ENCODE measurements at regions of chr11 and their contacts with region 1.

Region 1: GRCh38 chr11:119168471-119169281 is at the start of gene NLRX1:
- DNase-seq: peak; percentile 67 to 85 (median 82)
- ATAC-seq: peak; percentile 98
- H3K4me3 ChIP-seq: peak within 1 kb of the TSS; percentile 75
- H3K4me3 Mint-ChIP-seq: peak within 1 kb of the TSS; percentile 86 to 94 (median 90)
- H3K27ac ChIP-seq: peak within 1 kb of the TSS; percentile 73
- H3K27ac Mint-ChIP-seq: peak within 1 kb of the TSS; percentile 64 to 95 (median 87)
- H3K4me1 ChIP-seq: peaks cover 0 to 4% of the 10 kb centered on the region in 2 donors
- H3K4me1 Mint-ChIP-seq: peaks cover 4 to 25% (median 11%) of the 10 kb centered on the region in 7 donors
- H3K27me3 ChIP-seq: no peaks in the 10 kb centered on the region
- H3K27me3 Mint-ChIP-seq: no peaks in the 10 kb centered on the region
- total RNA-seq, gene NLRX1: 8.3 to 19.5 (median 9.8) TPM

Region 2: DNA sequence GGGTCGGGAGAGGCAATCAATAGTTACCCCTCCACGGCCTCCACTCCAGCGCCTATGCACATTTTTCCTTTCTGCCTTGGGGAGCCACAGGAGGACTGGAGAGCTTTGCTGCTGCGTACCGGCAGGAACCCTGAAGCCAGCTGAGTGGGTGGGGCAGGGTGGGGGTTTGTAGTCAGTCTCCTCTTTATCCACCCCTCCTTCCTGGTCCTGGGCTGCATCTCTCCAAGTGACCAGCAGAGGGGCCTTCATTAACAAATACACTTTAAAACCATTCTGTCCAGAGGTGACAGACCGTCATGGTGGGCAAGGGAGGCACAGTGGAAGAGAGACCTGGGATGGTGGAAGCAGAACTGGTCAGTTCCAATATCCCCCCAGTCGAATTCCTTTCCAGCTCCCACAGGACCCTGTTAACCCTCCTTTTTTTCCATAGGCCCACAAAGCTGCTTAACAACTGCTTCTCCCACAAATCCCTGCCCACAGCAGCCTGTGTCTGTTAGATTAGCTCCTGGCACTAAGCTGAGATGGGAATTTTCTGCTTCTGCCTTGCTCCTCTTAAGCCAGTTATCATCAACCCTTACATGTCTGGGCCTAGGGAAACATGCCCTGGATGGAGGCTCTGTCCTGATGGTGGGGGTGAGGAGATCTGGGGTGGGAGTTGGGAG is 23.7 kb before region 1 on chr11:
- CTCF ChIA-PET with region 1: no interaction called
- POLR2A ChIA-PET with region 1: interaction called, 3 read pairs
- intact Hi-C with region 1: loop called in 1 of 2 experiments (anchors 2 kb)
- DNase-seq: no peak
- ATAC-seq: peak; percentile 80
- H3K4me3 ChIP-seq: no peak overlapping the region
- H3K4me3 Mint-ChIP-seq: no peak overlapping the region
- H3K27ac ChIP-seq: no peak overlapping the region
- H3K27ac Mint-ChIP-seq: peak overlapping the region in 1 of 9 donors; percentile 59
- H3K4me1 ChIP-seq: peaks cover 0 to 11% of the 10 kb centered on the region in 2 donors
- H3K4me1 Mint-ChIP-seq: peaks cover 5 to 18% (median 13%) of the 10 kb centered on the region in 7 donors
- H3K27me3 ChIP-seq: no peaks in the 10 kb centered on the region
- H3K27me3 Mint-ChIP-seq: peaks cover 31 to 51% (median 36%) of the 10 kb centered on the region in 5 donors

Region 3: DNA sequence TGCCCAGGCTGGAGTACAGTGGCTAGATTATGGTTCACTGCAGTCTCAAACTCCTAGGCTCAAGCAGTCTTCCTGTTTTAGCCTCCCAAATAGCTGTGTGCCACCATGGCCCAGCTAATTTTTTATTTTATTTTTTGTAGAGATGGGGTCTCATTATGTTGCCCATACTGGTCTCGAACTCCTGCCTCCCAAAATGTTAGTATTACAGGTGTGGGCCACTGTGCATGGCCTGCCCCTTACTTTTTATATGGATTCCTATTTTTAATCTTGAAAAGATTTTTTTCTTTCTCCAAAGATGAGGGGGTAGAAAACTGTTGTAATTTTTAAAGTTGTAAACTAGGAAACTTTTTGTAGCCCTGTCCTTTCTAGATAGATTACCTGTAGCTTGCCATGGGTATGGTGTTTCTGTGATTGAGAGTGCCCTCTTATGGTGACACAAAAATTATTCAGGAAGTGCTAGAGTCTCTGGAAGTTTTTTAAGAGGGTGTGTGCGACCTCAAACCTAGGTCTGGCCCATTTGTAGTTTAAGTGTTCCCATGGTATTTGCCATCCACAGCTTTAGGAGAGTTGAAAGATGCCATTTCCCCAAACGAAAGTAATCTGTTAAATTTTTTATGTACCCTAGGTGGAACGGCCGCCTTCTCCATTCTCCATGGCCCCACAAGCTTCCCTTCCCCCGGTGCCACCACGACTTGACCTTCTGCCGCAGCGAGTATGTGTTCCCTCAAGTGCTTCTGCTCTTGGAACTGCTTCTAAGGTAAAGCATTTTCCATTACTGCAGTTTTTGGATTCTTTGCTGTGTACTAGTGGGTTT is 115.9 kb after region 1 on chr11:
- CTCF ChIA-PET with region 1: interaction called, 9 read pairs
- POLR2A ChIA-PET with region 1: interaction called, 3 read pairs
- intact Hi-C with region 1: loop called in 1 of 2 experiments (anchors 1 kb)
- DNase-seq: peak in 7 of 9 donors; percentile 56 to 76 (median 68)
- ATAC-seq: peak; percentile 94
- H3K4me3 ChIP-seq: no peak overlapping the region
- H3K4me3 Mint-ChIP-seq: peak overlapping the region in 2 of 10 donors; percentile 23 to 51
- H3K27ac ChIP-seq: no peak overlapping the region
- H3K27ac Mint-ChIP-seq: peak overlapping the region; percentile 24 to 91 (median 55)
- H3K4me1 ChIP-seq: peaks cover 0 to 6% of the 10 kb centered on the region in 2 donors
- H3K4me1 Mint-ChIP-seq: peaks cover 17 to 56% (median 41%) of the 10 kb centered on the region in 7 donors
- H3K27me3 ChIP-seq: no peaks in the 10 kb centered on the region
- H3K27me3 Mint-ChIP-seq: no peaks in the 10 kb centered on the region